ENCODE measurements at regions of chr7 and their contacts with region 1.

Region 1: GRCh38 chr7:7713730-7714129 is 4.7 kb downstream of the RPA3 start:
- DNase-seq: no peak
- ATAC-seq: no peak
- H3K4me3 Mint-ChIP-seq: no peak overlapping the region
- H3K27ac Mint-ChIP-seq: no peak overlapping the region
- H3K4me1 Mint-ChIP-seq: peaks cover 11% of the 10 kb centered on the region
- H3K27me3 Mint-ChIP-seq: no peaks in the 10 kb centered on the region
- CTCF ChIP-seq: no peak

Region 2: GRCh38 chr7:7732566-7733290 is 19.0 kb after region 1 on chr7:
- CTCF ChIA-PET with region 1: interaction called, 6 read pairs
- POLR2A ChIA-PET with region 1: no interaction called
- intact Hi-C with region 1: loop called (anchors 2 kb)
- DNase-seq: no peak
- ATAC-seq: peak; percentile 27
- H3K4me3 Mint-ChIP-seq: no peak overlapping the region
- H3K27ac Mint-ChIP-seq: no peak overlapping the region
- H3K4me1 Mint-ChIP-seq: peaks cover 9% of the 10 kb centered on the region
- H3K27me3 Mint-ChIP-seq: no peaks in the 10 kb centered on the region
- CTCF ChIP-seq: no peak

Measured in activated CD8-positive, alpha-beta T cell treated with anti-CD3 and anti-CD28 coated beads for 36 hours (primary cell).